Colonic mucosa (tissue), 4 donors: ENCODE measurements at regions of chr16 and their contacts with region 1.

Region 1: DNA sequence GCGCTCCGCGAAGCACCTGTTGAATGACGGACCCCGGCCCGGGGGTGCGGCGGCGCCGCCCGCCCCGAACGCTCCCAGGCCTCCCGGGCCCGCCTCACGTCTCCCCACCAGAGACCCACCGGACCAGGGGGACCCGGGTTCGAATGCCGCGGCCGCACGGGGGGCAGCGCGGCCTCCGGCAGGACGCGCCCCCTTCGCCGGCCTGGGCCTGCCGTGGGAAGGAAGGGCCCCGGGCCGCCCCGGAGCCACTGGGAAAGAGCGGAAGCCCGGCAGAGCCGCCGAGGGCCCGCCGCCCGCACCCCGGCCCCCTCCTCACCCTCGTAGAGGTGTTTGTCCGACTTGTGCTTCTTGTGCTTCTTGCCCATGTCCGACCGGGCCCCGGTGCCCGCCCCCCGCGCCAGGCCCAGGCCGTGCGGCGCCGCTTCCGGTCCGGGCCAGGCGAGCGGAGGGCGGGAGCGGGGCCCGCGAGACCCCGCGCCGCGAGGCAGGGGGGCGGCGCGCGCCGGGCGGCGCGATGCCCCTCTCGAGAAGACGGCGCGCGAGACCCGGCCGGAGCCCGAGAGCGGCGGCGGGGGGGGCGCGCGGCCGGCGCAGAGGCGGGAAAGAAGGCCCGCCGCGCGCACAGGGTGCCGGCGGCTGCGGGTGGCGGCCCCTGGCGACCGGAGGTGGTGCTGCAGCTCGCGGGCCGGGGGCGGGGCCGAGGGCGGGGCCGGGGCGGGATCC is at the start of gene BRD7:
- DNase-seq: peak; percentile 48
- H3K4me3 ChIP-seq: peak within 1 kb of the TSS; percentile 92
- H3K27ac ChIP-seq: no peak within 1 kb of the TSS
- H3K4me1 ChIP-seq: peaks cover 7% of the 10 kb centered on the region
- H3K27me3 ChIP-seq: no peaks in the 10 kb centered on the region
- CTCF ChIP-seq: no peak
- total RNA-seq, gene BRD7: 69.9 to 76.3 TPM

Region 2: DNA sequence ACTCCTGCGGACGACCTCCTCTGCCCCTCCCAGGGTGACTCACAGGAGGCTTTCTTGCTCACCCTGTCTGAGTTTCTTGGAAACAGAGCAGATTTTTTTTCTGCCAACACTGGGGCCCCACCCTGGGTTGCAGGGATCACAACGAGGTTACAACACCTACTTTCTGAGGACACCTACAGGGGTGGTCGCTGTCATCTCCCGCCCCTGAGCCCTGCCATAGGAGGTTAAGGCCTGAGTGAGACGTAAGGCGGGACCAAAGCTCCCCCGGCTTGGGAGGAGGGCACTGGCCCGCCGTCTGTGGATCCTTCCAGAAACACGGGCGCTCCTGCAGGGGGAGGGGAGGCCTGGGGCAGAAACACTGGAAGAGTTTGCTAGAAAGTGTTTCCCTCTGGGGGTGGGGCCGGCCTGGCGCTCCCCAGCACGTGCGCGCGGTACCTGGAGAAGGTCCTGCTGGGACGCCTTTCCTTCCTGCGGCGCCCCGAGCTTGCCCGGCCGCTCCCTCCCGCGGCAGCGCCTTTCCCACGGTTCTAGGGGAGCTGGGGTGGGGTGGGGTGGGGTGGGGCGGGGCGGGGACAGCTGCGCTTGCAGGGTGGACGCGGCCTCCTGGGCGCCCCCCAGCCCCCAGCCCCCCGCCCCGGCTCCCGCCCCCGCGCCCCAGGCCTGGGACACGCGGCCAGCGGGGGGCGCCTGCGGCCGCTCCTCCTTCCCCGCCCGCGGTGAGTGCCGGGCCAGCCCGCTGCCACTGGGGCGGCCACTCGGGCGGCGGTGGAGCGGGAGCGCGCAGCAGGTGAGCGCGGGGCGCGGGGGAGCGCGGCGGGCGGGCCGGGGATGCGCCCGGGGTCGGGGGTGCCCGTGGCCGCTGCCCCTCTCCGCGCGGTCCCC is 122.9 kb before region 1 on chr16:
- intact Hi-C with region 1: loop called (anchors 10 kb)
- DNase-seq: peak; percentile 79
- H3K4me3 ChIP-seq: peak overlapping the region; percentile 48
- H3K27ac ChIP-seq: no peak overlapping the region
- H3K4me1 ChIP-seq: peaks cover 15% of the 10 kb centered on the region
- H3K27me3 ChIP-seq: no peaks in the 10 kb centered on the region
- CTCF ChIP-seq: no peak

Region 3: GRCh38 chr16:50458694-50459495 is 90.3 kb after region 1 on chr16:
- intact Hi-C with region 1: no loop called
- DNase-seq: no peak
- H3K4me3 ChIP-seq: no peak overlapping the region
- H3K27ac ChIP-seq: no peak overlapping the region
- H3K4me1 ChIP-seq: no peaks in the 10 kb centered on the region
- H3K27me3 ChIP-seq: no peaks in the 10 kb centered on the region
- CTCF ChIP-seq: no peak

Region 4: GRCh38 chr16:50509521-50510341 is 141.2 kb after region 1 on chr16:
- intact Hi-C with region 1: loop called (anchors 10 kb)
- DNase-seq: peak; percentile 33
- H3K4me3 ChIP-seq: no peak overlapping the region
- H3K27ac ChIP-seq: no peak overlapping the region
- H3K4me1 ChIP-seq: no peaks in the 10 kb centered on the region
- H3K27me3 ChIP-seq: no peaks in the 10 kb centered on the region
- CTCF ChIP-seq: peak; percentile 61

Region 5: DNA sequence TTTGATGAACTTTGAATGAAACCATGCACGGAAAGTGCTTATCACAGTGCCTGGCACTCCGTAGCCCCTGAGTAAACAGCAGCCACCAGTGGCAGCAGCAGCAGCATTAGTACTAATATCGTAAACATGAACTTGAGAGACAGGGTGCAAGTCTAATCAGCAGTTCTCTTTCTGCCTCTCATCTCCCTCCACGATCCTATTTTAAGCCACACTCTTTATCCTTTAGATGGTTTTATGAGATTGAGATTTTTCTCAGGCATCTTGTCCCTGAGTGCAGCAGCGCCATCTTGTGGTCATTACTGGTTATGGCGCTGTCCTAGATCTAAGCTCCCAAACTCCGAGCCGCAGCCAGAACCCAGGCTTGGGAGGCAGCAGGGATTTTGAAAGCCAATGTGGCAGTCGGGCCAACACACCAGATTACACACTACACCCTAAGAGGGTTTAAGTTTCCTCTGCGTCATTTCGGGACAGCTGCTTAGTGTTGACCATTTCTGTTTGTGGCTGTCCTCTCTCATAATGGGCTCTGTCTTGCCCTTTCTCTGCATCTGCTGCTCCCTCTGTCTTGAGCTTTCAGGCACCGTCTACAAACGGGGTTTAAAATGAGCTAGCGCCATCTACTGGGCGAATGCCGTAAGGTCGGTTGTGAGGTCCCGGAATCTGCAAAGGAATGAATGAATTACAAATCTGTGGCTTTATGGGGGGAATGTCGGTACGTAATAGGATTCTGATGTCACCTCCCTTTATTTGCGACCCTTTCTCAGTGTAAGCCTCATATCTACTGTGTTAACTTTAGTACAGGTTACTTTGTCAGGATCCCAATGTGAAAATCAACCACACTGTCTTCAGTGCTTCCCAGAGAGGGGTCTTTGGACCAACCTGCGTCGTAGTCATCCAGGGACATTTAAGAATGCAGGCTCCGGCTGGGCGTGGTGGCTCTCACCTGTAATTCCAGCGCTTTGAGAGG is 437.8 kb after region 1 on chr16:
- intact Hi-C with region 1: loop called (anchors 10 kb)
- DNase-seq: peak; percentile 85
- H3K4me3 ChIP-seq: no peak overlapping the region
- H3K27ac ChIP-seq: no peak overlapping the region
- H3K4me1 ChIP-seq: no peaks in the 10 kb centered on the region
- H3K27me3 ChIP-seq: no peaks in the 10 kb centered on the region
- CTCF ChIP-seq: peak; percentile 97